ENCODE measurements at regions of chr6 and their contacts with region 1.

Region 1: GRCh38 chr6:139973669-139974344 is 599.4 kb upstream of the CITED2 start:
- DNase-seq: no peak
- ATAC-seq: peak; percentile 92

Region 2: GRCh38 chr6:139679516-139680179 is 294.2 kb before region 1 on chr6:
- intact Hi-C with region 1: no loop called
- DNase-seq: no peak
- ATAC-seq: no peak

Region 3: DNA sequence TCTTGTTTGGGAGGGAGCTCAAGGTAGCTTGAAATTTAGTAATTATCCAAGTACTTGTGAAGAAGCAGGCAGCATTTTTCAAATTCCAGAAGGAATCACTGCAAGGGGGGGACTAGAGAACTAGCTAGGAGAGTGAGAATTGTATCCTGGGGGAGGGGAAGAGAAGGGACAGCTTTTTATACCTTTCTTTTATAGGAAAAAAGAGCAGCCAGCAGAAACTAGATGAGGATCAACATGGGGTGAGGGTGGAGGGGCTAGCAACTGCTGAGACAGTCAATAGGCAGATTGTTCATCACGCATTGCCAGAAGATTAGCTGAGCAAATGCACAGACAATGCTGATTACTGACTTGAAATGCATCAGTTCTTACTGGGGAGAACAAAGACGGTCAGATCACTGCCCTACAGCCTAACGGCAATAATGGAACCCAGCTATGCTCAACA is 85.1 kb before region 1 on chr6:
- intact Hi-C with region 1: loop called (anchors 5 kb)
- DNase-seq: no peak
- ATAC-seq: no peak

Region 4: DNA sequence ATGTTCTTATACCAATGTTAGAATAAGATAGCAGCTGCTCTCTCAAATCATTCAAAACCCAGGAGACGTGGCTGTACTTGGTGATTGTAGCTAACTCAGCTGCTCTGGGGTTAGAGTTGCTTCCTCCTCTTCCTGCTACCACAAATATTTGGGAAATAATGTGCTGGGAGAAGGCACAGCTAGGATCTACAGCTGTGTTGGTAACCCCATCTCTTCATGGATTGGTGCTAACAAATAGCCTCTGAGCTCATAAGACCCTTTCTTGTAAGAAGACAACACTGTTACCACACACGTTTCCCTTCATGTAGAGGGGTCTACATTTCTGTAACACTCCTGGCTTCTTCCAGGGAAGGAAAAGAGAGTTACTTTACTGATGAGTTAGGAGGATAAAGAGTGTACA is 311.7 kb after region 1 on chr6:
- intact Hi-C with region 1: no loop called
- DNase-seq: no peak
- ATAC-seq: peak; percentile 29